CD14-positive monocyte (primary cell): ENCODE measurements at regions of chr21 and their contacts with region 1.

Region 1: DNA sequence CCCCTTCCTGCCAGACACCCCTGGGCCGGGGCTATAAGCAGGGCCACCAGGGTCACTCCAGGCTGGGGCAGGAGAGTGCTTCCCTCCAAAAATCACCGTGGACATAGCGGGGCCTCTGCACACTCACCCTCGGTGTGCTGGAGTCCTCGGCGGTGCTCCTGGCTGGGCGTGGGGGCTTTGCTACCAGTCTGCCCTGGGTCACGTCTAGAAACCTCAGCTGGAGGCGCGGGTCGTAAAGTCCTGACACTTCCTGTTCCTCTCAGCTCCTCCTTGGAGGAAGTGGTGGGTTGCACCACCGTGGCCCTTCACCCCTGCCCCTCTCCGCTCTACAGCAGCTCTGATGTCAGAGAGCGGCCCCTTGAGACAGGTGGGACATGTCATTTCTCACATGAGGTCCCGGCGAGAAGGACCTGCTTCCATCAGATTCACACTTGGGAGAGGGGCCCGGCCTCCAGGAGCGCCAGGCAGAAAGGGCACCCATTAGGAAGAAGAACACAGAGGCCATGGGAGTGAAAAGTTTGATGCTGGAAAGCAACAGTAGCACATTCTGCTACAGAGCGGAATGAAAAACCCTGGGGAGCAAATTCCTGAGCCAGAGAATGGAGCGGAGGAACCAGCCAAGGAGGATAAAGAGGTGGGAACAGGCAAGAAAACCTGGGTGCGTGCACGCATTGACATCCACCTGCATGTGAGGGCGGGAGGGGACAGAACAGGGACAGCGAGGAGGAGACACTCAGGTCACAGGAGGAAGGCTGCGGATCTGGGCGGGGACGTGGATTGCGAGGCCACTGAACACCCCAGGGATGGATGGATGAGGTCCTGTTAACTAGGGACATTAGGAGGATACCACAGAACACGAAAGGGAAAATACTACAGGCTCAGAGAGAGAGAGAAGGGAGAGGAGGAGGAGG is at the start of gene ITGB2:
- DNase-seq: peak; percentile 74 to 89 (median 85)
- H3K4me3 ChIP-seq: peak within 1 kb of the TSS; percentile 84 to 99 (median 98)
- H3K4me3 Mint-ChIP-seq: peak within 1 kb of the TSS; percentile 96 to 100
- H3K27ac ChIP-seq: peak within 1 kb of the TSS; percentile 65 to 87
- H3K27ac Mint-ChIP-seq: peak within 1 kb of the TSS; percentile 90 to 99 (median 99)
- H3K4me1 ChIP-seq: peaks cover 83 to 88% of the 10 kb centered on the region in 2 donors
- H3K4me1 Mint-ChIP-seq: peaks cover 81% of the 10 kb centered on the region
- H3K27me3 ChIP-seq: no peaks in the 10 kb centered on the region
- H3K27me3 Mint-ChIP-seq: no peaks in the 10 kb centered on the region
- CTCF ChIP-seq: no peak
- polyA plus RNA-seq, gene ITGB2: 1,470 to 1,628 (median 1,602) TPM

Region 2: DNA sequence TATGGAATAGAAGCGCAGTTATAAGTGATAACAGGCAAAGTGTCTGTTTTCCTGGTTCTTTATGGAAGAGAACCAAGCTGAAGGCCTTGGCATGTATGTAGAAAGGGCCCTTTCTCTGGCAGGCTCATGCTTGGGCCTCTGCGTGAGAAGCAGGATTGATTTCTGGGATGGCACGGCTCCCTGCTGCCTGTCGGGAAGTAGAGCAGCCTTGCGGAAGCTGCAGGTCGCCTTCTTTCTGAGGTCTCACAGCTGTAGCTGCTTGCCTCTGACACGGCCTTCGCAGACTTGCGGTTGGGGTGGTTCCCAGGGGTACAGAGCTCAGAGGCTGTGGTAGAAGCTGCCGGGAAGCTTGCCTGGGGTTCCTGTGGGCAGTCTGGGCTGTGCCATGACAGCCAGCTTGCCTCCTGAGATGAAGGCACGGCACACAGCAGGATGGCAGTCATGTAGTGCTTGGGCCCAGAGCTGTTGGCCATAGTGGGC is 869.4 kb before region 1 on chr21:
- intact Hi-C with region 1: no loop called
- DNase-seq: no peak
- H3K4me3 ChIP-seq: no peak overlapping the region
- H3K4me3 Mint-ChIP-seq: no peak overlapping the region
- H3K27ac ChIP-seq: peak overlapping the region in 1 of 2 donors; percentile 3
- H3K27ac Mint-ChIP-seq: peak overlapping the region in 2 of 7 donors; percentile 25 to 30
- H3K4me1 ChIP-seq: no peaks in the 10 kb centered on the region
- H3K4me1 Mint-ChIP-seq: no peaks in the 10 kb centered on the region
- H3K27me3 ChIP-seq: no peaks in the 10 kb centered on the region
- H3K27me3 Mint-ChIP-seq: peaks cover 0 to 1% (median 1%) of the 10 kb centered on the region in 3 donors
- CTCF ChIP-seq: no peak

Region 3: DNA sequence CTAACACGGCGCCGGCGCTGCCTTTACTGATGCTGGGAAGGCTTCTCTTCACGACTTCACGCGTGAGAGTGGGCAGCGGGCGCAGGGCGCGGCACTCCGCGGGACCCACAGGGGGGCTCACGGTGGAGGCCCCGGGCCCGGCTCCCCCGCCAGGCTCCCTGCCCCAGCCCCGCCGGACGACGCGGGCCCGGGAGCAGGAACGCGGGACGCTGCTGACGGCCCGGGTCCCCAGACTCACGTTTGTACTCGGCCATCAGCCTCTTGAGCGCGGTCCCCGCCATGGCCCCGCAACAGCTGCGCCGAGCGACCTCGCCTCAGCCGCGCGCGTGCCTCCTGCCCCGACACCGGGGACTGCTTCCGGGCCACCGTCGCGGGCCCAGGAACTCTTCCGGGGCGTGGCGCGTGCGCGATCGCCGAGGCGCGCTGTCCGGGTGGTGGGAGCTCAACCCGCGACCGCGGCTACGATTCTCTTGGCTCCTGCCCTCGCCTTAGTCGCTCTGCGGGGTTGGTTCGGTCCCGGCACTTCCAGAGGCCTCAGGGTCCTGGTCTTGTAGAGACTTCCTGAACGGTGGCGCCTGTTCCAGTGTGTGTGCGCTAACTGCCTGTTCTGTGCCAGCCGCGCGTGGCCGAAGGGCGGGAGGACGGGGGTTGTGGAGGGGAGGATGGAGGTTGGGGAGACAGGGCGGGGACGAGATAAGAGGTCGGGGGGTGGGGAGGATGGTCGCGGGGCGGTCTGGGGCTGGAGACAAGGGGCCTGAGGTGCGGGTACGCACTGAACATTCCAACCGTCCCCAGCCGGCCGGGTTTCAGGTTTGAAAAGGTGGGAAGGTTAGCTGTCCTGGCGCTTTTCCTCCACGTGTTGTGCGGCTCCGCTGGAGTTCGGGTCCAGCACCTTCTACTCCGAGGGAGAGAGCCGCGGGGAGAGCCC is 119.2 kb before region 1 on chr21 and contains the start of gene UBE2G2:
- intact Hi-C with region 1: loop called (anchors 5 kb)
- DNase-seq: peak; percentile 68 to 76 (median 75)
- H3K4me3 ChIP-seq: peak within 1 kb of the TSS; percentile 65 to 86 (median 73)
- H3K4me3 Mint-ChIP-seq: peak within 1 kb of the TSS; percentile 84 to 97
- H3K27ac ChIP-seq: peak within 1 kb of the TSS in 1 of 2 donors; percentile 74
- H3K27ac Mint-ChIP-seq: peak within 1 kb of the TSS; percentile 42 to 92 (median 84)
- H3K4me1 ChIP-seq: peaks cover 22 to 32% of the 10 kb centered on the region in 2 donors
- H3K4me1 Mint-ChIP-seq: peaks cover 33% of the 10 kb centered on the region
- H3K27me3 ChIP-seq: no peaks in the 10 kb centered on the region
- H3K27me3 Mint-ChIP-seq: peaks cover 0 to 2% (median 0%) of the 10 kb centered on the region in 3 donors
- CTCF ChIP-seq: peak; percentile 15
- polyA plus RNA-seq, gene UBE2G2: 22.5 to 123 (median 31.0) TPM